HEK293 (cell line): ENCODE measurements at regions of chr14 and their contacts with region 1.

Region 1: GRCh38 chr14:25821527-25821926 is 771.6 kb upstream of the STXBP6 start:
- H3K4me3 ChIP-seq: no peak overlapping the region
- H3K27ac ChIP-seq: no peak overlapping the region
- H3K4me1 ChIP-seq: no peaks in the 10 kb centered on the region
- CTCF ChIP-seq: no peak

Region 2: GRCh38 chr14:25833341-25834126 is 12.0 kb after region 1 on chr14:
- CTCF ChIA-PET with region 1: interaction called, 10 read pairs
- POLR2A ChIA-PET with region 1: no interaction called
- H3K4me3 ChIP-seq: no peak overlapping the region
- H3K27ac ChIP-seq: no peak overlapping the region
- H3K4me1 ChIP-seq: no peaks in the 10 kb centered on the region
- CTCF ChIP-seq: no peak